Activated CD4-positive, alpha-beta T cell treated with anti-CD3 and anti-CD28 coated beads, Interleukin-2, amount 10 ng/mL, durations not matched to agents 24 days and 14 days (primary cell): ENCODE measurements at regions of chr1 and their contacts with region 1.

Region 1: DNA sequence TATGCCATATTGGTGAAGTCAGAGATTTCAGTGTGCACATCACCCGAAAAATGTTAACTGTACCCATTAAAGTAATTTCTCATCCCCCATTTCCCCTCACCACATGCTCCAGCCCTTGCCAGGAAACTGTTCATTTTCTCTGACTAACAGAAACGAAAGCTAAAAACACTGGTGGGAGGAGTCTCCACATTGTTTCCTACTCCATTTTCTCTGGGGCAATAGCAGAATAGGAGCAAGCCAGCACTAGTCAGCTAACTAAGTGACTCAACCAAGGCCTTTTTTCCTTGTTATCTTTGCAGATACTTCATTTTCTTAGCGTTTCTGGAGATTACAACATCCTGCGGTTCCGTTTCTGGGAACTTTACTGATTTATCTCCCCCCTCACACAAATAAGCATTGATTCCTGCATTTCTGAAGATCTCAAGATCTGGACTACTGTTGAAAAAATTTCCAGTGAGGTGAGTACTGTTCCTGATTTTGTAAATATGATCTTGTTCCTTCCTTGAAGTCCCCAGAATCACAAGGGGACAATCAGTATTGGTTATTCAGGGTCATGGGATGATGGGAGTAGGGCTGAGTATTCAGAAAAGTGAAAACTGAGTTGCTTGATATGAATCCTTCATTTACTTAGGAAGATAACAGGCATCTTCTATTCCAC is at the start of gene IFI16:
- DNase-seq: peak; percentile 93
- H3K4me3 Mint-ChIP-seq: peak within 1 kb of the TSS; percentile 92
- H3K27ac Mint-ChIP-seq: peak within 1 kb of the TSS; percentile 98
- H3K4me1 Mint-ChIP-seq: peaks cover 52% of the 10 kb centered on the region
- H3K27me3 Mint-ChIP-seq: no peaks in the 10 kb centered on the region
- total RNA-seq, gene IFI16: 217 and 223 TPM in 2 replicates

Region 2: DNA sequence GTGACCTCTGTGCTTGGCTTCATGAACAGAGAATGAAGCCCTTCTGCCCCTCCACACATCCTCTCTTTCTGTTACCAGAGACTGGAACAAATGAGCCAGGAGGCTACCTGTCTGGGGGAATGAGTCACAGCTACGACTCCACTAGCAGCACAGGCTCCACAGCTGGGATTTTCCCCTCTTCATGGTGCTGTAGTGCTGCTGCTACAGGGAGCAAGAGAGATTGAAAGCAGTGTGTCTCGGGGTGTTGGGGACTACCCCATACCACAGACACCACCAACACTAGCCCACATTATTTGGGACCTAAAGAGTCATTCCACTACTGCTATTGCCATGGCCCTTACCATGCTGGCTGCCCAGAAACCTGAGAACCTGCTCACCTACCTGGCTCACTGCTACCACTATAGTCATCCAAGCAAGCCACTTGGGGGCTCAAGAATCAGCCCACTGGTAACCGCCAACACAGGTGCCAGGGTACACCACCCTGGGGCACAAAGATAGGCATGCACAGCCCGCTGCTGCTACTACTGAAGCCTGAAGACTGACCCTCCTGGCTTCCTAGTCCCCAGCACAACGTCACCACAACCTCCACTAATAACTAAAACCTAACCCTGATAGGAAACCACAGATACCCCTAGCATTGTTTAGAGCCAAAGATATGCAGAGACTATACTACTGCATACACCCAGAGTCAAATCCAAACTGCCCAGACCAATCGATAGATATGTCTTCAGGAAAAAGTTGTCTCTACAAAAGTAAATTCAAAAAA is 638.5 kb before region 1 on chr1:
- intact Hi-C with region 1: loop called (anchors 10 kb)
- DNase-seq: peak; percentile 56
- H3K4me3 Mint-ChIP-seq: no peak overlapping the region
- H3K27ac Mint-ChIP-seq: no peak overlapping the region
- H3K4me1 Mint-ChIP-seq: peaks cover 9% of the 10 kb centered on the region
- H3K27me3 Mint-ChIP-seq: no peaks in the 10 kb centered on the region

Region 3: DNA sequence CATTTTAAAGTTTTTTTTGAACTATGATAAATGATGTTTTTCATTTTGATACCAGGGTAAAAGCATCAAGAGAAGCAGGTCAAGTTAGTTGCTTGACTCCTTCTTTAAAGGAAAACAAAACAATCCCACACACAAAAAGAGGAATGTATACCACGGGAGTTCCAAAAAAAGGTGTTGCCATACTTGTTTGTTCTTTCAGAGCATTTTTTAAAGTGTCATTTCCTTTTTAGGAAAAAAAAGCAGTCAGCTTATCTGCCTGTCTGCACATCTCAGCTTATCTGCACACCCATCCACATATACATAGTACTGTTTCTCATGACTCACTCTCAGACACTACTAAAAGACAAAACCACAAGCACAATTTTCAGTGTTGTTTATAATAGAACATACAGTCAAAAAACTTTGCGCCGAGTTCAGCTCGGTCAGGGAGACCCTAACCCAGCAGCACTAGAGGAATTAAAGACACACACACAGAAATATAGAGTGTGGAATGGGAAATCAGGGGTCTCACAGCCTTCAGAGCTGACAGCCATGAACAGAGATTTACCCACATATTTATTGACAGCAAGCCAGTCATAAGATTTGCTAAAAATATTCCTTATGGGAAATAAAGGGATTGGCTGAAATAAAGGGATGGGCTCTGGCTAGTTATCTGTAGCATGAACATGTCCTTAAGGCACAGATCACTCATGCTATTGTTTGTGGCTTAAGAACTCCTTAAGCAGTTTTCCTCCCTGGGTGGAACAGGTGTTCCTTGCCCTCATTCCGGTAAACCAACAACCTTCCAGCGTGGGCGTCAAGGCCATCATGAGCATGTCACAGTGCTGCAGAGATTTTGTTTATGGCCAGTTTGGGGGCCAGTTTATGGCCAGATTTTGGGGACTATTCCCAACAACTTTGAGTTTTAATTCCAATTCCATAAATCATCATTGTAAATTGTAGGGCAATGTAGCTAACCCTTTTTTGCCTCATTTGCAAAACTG is 190.1 kb before region 1 on chr1:
- intact Hi-C with region 1: loop called (anchors 1 kb)
- DNase-seq: peak; percentile 74
- H3K4me3 Mint-ChIP-seq: peak overlapping the region; percentile 70
- H3K27ac Mint-ChIP-seq: peak overlapping the region; percentile 76
- H3K4me1 Mint-ChIP-seq: peaks cover 27% of the 10 kb centered on the region
- H3K27me3 Mint-ChIP-seq: peaks cover 7% of the 10 kb centered on the region

Region 4: GRCh38 chr1:158969855-158970254 is 40.0 kb before region 1 on chr1:
- intact Hi-C with region 1: loop called (anchors 1 kb)
- DNase-seq: no peak
- H3K4me3 Mint-ChIP-seq: no peak overlapping the region
- H3K27ac Mint-ChIP-seq: peak overlapping the region; percentile 84
- H3K4me1 Mint-ChIP-seq: peaks cover 15% of the 10 kb centered on the region
- H3K27me3 Mint-ChIP-seq: no peaks in the 10 kb centered on the region

Region 5: DNA sequence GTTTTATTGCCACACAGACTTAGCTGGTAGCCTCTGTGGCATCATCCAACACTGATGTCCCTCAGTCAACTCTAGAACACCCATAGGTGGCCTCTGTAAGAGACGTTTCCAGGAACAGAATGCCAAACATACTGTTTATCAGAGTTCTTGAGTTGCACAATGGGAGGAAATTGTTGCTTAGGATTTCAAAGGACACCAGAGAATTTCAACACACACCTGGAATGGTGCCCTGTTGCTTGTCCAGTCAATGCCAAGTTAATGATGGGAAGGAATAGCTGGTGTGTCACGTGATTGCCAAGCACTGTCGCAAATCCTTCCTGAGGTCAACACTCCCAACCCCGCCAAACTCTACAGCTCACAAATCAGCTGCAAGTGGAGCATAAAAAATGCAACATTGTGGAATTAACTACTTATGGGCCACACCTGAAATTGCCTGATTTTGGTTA is 742.3 kb after region 1 on chr1:
- intact Hi-C with region 1: no loop called
- DNase-seq: no peak
- H3K4me3 Mint-ChIP-seq: no peak overlapping the region
- H3K27ac Mint-ChIP-seq: no peak overlapping the region
- H3K4me1 Mint-ChIP-seq: no peaks in the 10 kb centered on the region
- H3K27me3 Mint-ChIP-seq: no peaks in the 10 kb centered on the region

Region 6: DNA sequence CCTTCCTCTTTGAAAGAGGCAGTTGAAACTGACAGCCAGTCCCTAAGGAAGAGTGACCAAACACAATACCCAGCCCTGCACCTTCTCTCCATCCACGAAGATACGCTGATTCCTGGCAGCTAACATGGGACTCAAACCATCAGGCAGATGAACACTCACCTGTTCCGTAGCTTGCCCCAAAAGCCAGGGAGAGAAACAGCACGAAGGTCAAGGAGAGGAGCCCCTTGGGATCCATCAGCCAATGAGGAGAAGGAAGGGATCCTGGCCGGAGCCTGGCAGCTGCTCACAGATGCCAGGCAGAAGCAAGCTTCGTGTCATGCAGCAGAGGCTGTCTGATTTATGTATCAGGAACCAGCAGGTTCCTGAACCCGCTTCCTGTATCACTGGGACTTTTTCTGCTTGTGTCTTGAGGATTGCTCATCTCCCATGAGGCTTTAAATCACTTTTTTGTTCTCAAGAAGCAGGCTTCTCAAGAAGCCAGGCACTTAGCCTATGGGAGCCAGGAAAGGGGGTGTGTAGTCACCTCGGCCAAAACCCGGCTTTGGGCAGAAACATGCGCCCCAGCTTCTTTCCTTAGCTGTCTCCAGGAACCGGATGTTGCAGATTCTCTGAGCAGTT is 1637.0 kb after region 1 on chr1 and contains the start of gene SLAMF1:
- intact Hi-C with region 1: loop called (anchors 10 kb)
- DNase-seq: peak; percentile 81
- H3K4me3 Mint-ChIP-seq: peak within 1 kb of the TSS; percentile 98
- H3K27ac Mint-ChIP-seq: peak within 1 kb of the TSS; percentile 98
- H3K4me1 Mint-ChIP-seq: peaks cover 49% of the 10 kb centered on the region
- H3K27me3 Mint-ChIP-seq: no peaks in the 10 kb centered on the region
- total RNA-seq, gene SLAMF1: 113 and 114 TPM in 2 replicates